ENCODE measurements at regions of chr2 and their contacts with region 1.

Region 1: DNA sequence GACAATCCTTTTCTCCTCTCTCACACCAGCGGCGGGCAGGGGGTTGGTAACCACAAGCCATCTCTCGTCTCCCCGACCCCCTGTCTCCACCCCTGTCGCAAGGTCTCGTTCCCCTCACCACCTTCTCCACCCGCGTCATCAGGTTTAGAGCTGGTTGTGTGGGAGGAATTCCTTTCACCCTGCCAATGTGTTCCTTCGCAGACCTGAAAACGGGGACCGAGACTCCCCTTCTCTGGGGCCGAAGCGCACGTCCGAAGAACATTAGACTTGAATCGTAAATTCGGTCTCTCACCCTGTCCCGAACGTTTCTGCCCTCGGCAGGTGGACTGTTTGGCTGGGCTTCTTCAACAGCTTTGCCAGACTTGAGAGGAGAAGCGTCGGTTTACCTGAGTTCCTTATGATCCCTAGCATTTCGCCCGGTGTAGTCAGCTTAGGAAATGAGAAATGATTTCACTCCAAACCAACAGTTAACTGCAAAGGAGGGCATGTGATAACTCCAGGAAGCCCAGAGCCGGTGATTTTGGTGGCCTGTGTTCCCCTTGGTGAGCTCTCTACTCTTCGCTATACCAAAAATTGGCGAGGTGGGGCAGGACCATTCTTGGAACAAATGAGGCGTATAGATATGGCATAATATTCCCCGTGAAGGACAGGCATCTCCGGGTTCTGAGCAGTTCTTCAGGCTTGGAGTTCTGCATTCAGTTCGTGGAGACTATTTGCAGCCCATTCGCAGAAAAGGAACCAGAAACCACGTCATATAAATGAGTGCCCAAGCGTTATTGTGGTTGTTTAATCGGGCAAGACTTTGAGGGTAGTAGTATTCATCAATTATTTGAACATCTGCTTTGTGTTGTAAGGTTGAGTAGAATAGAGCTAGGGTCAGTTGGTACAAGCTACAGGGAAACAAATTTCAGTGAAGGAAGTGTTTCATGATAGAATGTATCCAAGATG is 694 bp downstream of the CFAP36 start:
- DNase-seq: peak in 8 of 9 experiments; percentile 14 to 67 (median 44)
- ATAC-seq: peak; percentile 27
- H3K4me3 ChIP-seq: peak overlapping the region; percentile 85 to 87
- H3K4me3 Mint-ChIP-seq: peak overlapping the region; percentile 97
- H3K27ac ChIP-seq: peak overlapping the region; percentile 85 to 95
- H3K27ac Mint-ChIP-seq: peak overlapping the region; percentile 100
- H3K4me1 ChIP-seq: peaks cover 8% of the 10 kb centered on the region
- H3K4me1 Mint-ChIP-seq: peaks cover 20% of the 10 kb centered on the region
- H3K27me3 ChIP-seq: no peaks in the 10 kb centered on the region
- H3K27me3 Mint-ChIP-seq: no peaks in the 10 kb centered on the region
- CTCF ChIP-seq: no peak

Region 2: DNA sequence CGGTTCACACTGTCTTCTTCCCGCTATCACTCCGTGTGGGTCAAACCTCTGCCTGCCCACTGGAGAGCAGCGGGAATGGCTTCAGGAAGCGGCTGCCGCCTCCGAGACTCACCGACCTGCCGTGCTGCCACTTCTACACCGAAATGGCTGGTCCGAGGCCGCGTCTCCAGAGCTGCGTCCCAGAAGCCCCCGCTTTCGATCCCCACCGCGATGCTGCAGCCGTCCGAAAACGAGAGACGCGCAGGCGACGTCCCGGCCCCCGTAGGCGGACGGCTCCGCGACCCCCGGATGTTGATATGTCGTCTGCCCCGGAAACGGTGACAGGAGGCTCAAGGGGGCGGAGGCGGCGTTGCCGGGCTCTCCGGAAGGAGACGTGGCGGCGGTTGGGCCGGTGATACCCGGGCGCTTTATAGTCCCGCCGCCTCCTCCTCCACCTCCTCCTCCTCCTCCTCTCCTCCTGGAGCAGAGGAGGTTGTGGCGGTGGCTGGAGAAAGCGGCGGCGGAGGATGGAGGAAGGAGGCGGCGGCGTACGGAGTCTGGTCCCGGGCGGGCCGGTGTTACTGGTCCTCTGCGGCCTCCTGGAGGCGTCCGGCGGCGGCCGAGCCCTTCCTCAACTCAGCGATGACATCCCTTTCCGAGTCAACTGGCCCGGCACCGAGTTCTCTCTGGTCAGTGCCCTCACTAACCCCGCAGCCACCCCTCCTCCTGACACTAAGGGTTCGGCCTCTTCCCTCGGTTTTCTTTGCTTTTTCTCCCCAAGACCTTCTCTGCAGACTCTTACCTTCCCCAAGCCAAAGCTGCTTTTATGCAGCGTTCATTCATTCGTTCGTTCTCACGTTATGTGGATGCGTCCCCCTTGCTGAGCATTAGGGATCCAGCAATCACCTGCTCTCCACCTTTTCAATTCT is 1733.3 kb before region 1 on chr2 and contains the starts of genes ASB3 and ERLEC1:
- CTCF ChIA-PET with region 1: no interaction called
- POLR2A ChIA-PET with region 1: interaction called, 3 read pairs
- intact Hi-C with region 1: loop called in 1 of 2 experiments (anchors 2 kb)
- DNase-seq: peak; percentile 78 to 95 (median 90)
- ATAC-seq: peak; percentile 88
- H3K4me3 ChIP-seq: peak within 1 kb of the TSS; percentile 94 to 96
- H3K4me3 Mint-ChIP-seq: peak within 1 kb of the TSS; percentile 95
- H3K27ac ChIP-seq: peak within 1 kb of the TSS; percentile 88 to 89
- H3K27ac Mint-ChIP-seq: peak within 1 kb of the TSS; percentile 95
- H3K4me1 ChIP-seq: peaks cover 30% of the 10 kb centered on the region
- H3K4me1 Mint-ChIP-seq: peaks cover 63% of the 10 kb centered on the region
- H3K27me3 ChIP-seq: no peaks in the 10 kb centered on the region
- H3K27me3 Mint-ChIP-seq: no peaks in the 10 kb centered on the region
- CTCF ChIP-seq: no peak
- total RNA-seq, gene ASB3: 25.0 to 26.2 TPM
- total RNA-seq, gene ERLEC1: 24.1 to 27.1 TPM

Region 3: GRCh38 chr2:55268907-55269644 is 251.1 kb before region 1 on chr2 and contains the start of gene MTIF2:
- CTCF ChIA-PET with region 1: no interaction called
- POLR2A ChIA-PET with region 1: interaction called, 4 read pairs
- intact Hi-C with region 1: loop called in 1 of 2 experiments (anchors 5 kb)
- DNase-seq: peak; percentile 75 to 93 (median 88)
- ATAC-seq: peak; percentile 83
- H3K4me3 ChIP-seq: peak within 1 kb of the TSS; percentile 61 to 67
- H3K4me3 Mint-ChIP-seq: peak within 1 kb of the TSS; percentile 95
- H3K27ac ChIP-seq: peak within 1 kb of the TSS; percentile 59 to 66
- H3K27ac Mint-ChIP-seq: peak within 1 kb of the TSS; percentile 96
- H3K4me1 ChIP-seq: peaks cover 4% of the 10 kb centered on the region
- H3K4me1 Mint-ChIP-seq: peaks cover 26% of the 10 kb centered on the region
- H3K27me3 ChIP-seq: peaks cover 0 to 2% of the 10 kb centered on the region in 2 experiments
- H3K27me3 Mint-ChIP-seq: no peaks in the 10 kb centered on the region
- CTCF ChIP-seq: no peak
- total RNA-seq, gene MTIF2: 12.2 to 14.4 TPM

Region 4: GRCh38 chr2:55419679-55420438 is 100.4 kb before region 1 on chr2 and contains the start of gene CCDC88A:
- CTCF ChIA-PET with region 1: interaction called, 3 read pairs
- POLR2A ChIA-PET with region 1: interaction called, 13 read pairs
- intact Hi-C with region 1: loop called (anchors 1 to 2 kb)
- DNase-seq: peak; percentile 71 to 96 (median 85)
- ATAC-seq: peak; percentile 80
- H3K4me3 ChIP-seq: peak within 1 kb of the TSS; percentile 75 to 93
- H3K4me3 Mint-ChIP-seq: peak within 1 kb of the TSS; percentile 92
- H3K27ac ChIP-seq: peak within 1 kb of the TSS; percentile 57 to 83
- H3K27ac Mint-ChIP-seq: peak within 1 kb of the TSS; percentile 87
- H3K4me1 ChIP-seq: peaks cover 14% of the 10 kb centered on the region
- H3K4me1 Mint-ChIP-seq: peaks cover 38% of the 10 kb centered on the region
- H3K27me3 ChIP-seq: no peaks in the 10 kb centered on the region
- H3K27me3 Mint-ChIP-seq: peaks cover 4% of the 10 kb centered on the region
- CTCF ChIP-seq: no peak
- total RNA-seq, gene CCDC88A: 9.5 to 12.3 TPM

Region 5: DNA sequence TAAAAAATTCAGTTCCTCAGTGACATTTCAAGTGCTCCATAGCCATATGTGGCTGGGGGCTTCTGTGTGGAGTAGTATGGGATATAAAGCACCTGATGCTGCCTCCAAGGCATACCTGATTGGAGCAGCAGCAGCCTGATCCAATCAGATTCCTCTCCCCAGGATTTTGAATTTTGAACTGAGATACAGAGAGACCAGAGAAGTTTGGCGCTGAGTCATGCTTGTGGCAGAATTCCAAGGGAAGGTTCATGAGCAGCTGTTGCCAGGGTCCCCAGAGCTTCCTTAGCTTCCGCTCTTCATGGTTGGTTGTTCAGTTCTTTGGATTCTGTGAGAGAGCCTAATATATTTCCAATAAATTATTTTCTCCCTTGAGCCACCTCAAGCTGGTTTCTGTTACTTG is 29.7 kb before region 1 on chr2:
- CTCF ChIA-PET with region 1: no interaction called
- POLR2A ChIA-PET with region 1: no interaction called
- intact Hi-C with region 1: no loop called
- DNase-seq: no peak
- ATAC-seq: no peak
- H3K4me3 ChIP-seq: no peak overlapping the region
- H3K4me3 Mint-ChIP-seq: no peak overlapping the region
- H3K27ac ChIP-seq: no peak overlapping the region
- H3K27ac Mint-ChIP-seq: no peak overlapping the region
- H3K4me1 ChIP-seq: no peaks in the 10 kb centered on the region
- H3K4me1 Mint-ChIP-seq: no peaks in the 10 kb centered on the region
- H3K27me3 ChIP-seq: peaks cover 0 to 5% of the 10 kb centered on the region in 2 experiments
- H3K27me3 Mint-ChIP-seq: peaks cover 9% of the 10 kb centered on the region
- CTCF ChIP-seq: no peak

Region 6: GRCh38 chr2:55693181-55694134 is 173.2 kb after region 1 on chr2 and contains the start of gene PNPT1:
- CTCF ChIA-PET with region 1: no interaction called
- POLR2A ChIA-PET with region 1: interaction called, 5 read pairs
- intact Hi-C with region 1: loop called (anchors 1 to 5 kb)
- DNase-seq: peak; percentile 84 to 95 (median 92)
- ATAC-seq: peak; percentile 100
- H3K4me3 ChIP-seq: peak within 1 kb of the TSS; percentile 90 to 98
- H3K4me3 Mint-ChIP-seq: peak within 1 kb of the TSS; percentile 98
- H3K27ac ChIP-seq: peak within 1 kb of the TSS; percentile 59 to 66
- H3K27ac Mint-ChIP-seq: peak within 1 kb of the TSS; percentile 93
- H3K4me1 ChIP-seq: peaks cover 12% of the 10 kb centered on the region
- H3K4me1 Mint-ChIP-seq: peaks cover 40% of the 10 kb centered on the region
- H3K27me3 ChIP-seq: no peaks in the 10 kb centered on the region
- H3K27me3 Mint-ChIP-seq: no peaks in the 10 kb centered on the region
- CTCF ChIP-seq: no peak
- total RNA-seq, gene PNPT1: 12.8 to 13.9 TPM